Right ventricle myocardium superior (tissue), 1 donor: ENCODE measurements at regions of chr17 and their contacts with region 1.

Region 1: DNA sequence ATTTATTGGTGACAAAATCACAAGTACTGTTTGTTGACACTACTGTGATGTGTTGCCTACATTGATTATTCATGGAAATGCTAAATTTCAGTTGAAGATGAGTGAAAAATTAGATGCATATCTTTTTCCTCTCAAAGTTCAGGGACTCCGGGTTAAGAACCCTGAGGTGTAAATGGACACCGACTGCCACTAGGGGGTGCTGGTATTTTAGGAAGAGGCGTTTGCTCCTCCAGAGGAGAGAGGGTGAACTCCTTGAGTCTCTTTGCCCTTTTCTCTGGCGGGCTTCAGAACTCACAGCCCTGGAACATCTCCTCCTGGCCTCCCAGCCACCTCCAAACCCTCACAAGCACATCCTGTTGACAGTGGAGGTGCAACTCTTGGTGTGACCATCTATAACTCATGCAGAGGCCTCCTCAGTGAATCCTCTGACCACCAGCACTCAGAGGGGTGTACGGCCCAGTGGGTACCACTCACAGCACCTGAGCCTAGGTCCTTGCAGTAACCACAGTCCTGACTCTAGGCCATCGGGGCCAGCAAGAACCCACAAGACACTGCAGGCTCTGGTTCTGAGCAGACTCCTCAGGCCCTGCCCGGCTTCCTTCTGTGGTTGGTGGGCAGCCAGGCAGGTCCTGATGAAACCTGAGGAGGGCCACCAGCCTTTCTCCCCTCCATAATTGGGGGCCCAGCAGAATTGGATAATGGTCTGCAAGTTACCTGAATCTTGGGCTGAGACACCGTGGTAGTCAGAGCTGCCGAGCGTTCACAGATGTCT is 26.2 kb upstream of the PIK3R5 start:
- DNase-seq: no peak
- ATAC-seq: peak; percentile 64

Region 2: GRCh38 chr17:9132944-9133575 is 141.4 kb after region 1 on chr17:
- intact Hi-C with region 1: no loop called
- DNase-seq: no peak
- ATAC-seq: no peak

Region 3: GRCh38 chr17:9522074-9522473 is 530.4 kb after region 1 on chr17:
- intact Hi-C with region 1: loop called (anchors 5 kb)
- DNase-seq: no peak
- ATAC-seq: peak; percentile 78